Esophagus muscularis mucosa (tissue), 4 donors: ENCODE measurements at regions of chr7 and their contacts with region 1.

Region 1: GRCh38 chr7:137592232-137592896 is 248.8 kb upstream of the PTN start:
- DNase-seq: no peak
- H3K4me3 ChIP-seq: no peak overlapping the region
- H3K27ac ChIP-seq: no peak overlapping the region
- H3K4me1 ChIP-seq: peaks cover 0 to 11% (median 7%) of the 10 kb centered on the region in 4 donors
- H3K27me3 ChIP-seq: no peaks in the 10 kb centered on the region
- CTCF ChIP-seq: peak; percentile 41 to 65 (median 56)
- EP300 ChIP-seq: no peak
- POLR2A ChIP-seq: no peak

Region 2: GRCh38 chr7:137169282-137169698 is 423.1 kb before region 1 on chr7:
- intact Hi-C with region 1: loop called (anchors 5 kb)
- DNase-seq: no peak
- H3K4me3 ChIP-seq: no peak overlapping the region
- H3K27ac ChIP-seq: no peak overlapping the region
- H3K4me1 ChIP-seq: peaks cover 0 to 13% (median 3%) of the 10 kb centered on the region in 4 donors
- H3K27me3 ChIP-seq: no peaks in the 10 kb centered on the region
- CTCF ChIP-seq: peak; percentile 48 to 69 (median 61)
- EP300 ChIP-seq: no peak
- POLR2A ChIP-seq: no peak

Region 3: DNA sequence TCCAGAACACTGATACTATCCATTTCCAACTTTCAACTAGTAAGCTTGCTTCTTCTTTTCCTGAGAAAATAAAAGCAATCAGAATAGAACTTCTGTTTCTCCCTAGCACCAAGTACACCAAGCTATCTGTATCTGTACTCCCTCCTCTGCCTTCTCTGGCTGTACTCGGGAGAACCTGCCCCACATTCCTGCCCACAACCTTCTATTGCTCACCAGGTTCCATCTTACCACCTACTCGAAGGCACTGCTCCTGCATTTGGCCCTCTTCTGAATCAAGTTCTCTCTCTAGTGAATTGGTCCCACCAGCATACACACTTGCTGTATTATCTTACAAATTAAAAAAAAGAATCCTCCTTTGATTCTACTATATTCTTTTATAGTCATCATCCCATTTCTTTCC is 79.3 kb before region 1 on chr7:
- intact Hi-C with region 1: no loop called
- DNase-seq: no peak
- H3K4me3 ChIP-seq: no peak overlapping the region
- H3K27ac ChIP-seq: no peak overlapping the region
- H3K4me1 ChIP-seq: no peaks in the 10 kb centered on the region
- H3K27me3 ChIP-seq: no peaks in the 10 kb centered on the region
- CTCF ChIP-seq: no peak
- EP300 ChIP-seq: no peak
- POLR2A ChIP-seq: no peak

Region 4: GRCh38 chr7:137538361-137538762 is 54.0 kb before region 1 on chr7:
- intact Hi-C with region 1: no loop called
- DNase-seq: no peak
- H3K4me3 ChIP-seq: no peak overlapping the region
- H3K27ac ChIP-seq: no peak overlapping the region
- H3K4me1 ChIP-seq: no peaks in the 10 kb centered on the region
- H3K27me3 ChIP-seq: no peaks in the 10 kb centered on the region
- CTCF ChIP-seq: no peak
- EP300 ChIP-seq: no peak
- POLR2A ChIP-seq: no peak

Region 5: GRCh38 chr7:137642472-137642871 is 50.1 kb after region 1 on chr7:
- intact Hi-C with region 1: no loop called
- DNase-seq: no peak
- H3K4me3 ChIP-seq: no peak overlapping the region
- H3K27ac ChIP-seq: no peak overlapping the region
- H3K4me1 ChIP-seq: peaks cover 0 to 4% (median 0%) of the 10 kb centered on the region in 4 donors
- H3K27me3 ChIP-seq: peaks cover 0 to 3% (median 0%) of the 10 kb centered on the region in 4 donors
- CTCF ChIP-seq: no peak
- EP300 ChIP-seq: no peak
- POLR2A ChIP-seq: no peak